Sigmoid colon (tissue), 7 donors: ENCODE measurements at regions of chr15 and their contacts with region 1.

Region 1: GRCh38 chr15:37134699-37135131 is 34.4 kb upstream of the MEIS2 start:
- DNase-seq: no peak
- H3K4me3 ChIP-seq: no peak overlapping the region
- H3K27ac ChIP-seq: no peak overlapping the region
- H3K4me1 ChIP-seq: peaks cover 0 to 42% (median 21%) of the 10 kb centered on the region in 4 donors
- H3K27me3 ChIP-seq: no peaks in the 10 kb centered on the region
- CTCF ChIP-seq: peak; percentile 64 to 84 (median 73)
- EP300 ChIP-seq: no peak
- POLR2A ChIP-seq: no peak

Region 2: GRCh38 chr15:35751413-35752133 is 1383.1 kb before region 1 on chr15:
- intact Hi-C with region 1: loop called (anchors 5 kb)
- DNase-seq: peak; percentile 84
- H3K4me3 ChIP-seq: no peak overlapping the region
- H3K27ac ChIP-seq: no peak overlapping the region
- H3K4me1 ChIP-seq: peaks cover 0 to 20% (median 0%) of the 10 kb centered on the region in 4 donors
- H3K27me3 ChIP-seq: no peaks in the 10 kb centered on the region
- CTCF ChIP-seq: peak; percentile 8 to 72 (median 48)
- EP300 ChIP-seq: no peak
- POLR2A ChIP-seq: no peak

Region 3: DNA sequence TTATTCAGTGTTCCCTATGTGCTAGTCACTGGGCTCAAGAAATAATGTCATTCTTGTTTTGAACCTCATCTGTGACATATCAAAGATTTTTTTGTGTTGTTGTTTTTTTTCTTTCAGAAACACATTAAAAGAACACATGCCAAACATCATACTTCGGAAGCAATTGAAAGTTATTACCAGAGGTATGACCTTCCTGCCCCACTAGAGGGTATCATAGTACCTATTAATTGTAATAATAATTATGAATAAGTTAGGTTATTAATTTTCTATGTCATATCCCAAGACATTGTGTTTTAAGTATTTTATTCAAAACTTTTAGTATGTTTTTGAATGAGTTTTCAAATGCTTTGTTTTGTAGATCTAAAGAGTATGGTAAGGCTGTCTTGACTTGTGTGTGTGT is 489.6 kb before region 1 on chr15:
- intact Hi-C with region 1: loop called (anchors 10 kb)
- DNase-seq: no peak
- H3K4me3 ChIP-seq: no peak overlapping the region
- H3K27ac ChIP-seq: no peak overlapping the region
- H3K4me1 ChIP-seq: peaks cover 0 to 7% (median 0%) of the 10 kb centered on the region in 4 donors
- H3K27me3 ChIP-seq: no peaks in the 10 kb centered on the region
- CTCF ChIP-seq: peak in 1 of 4 experiments; percentile 38
- EP300 ChIP-seq: no peak
- POLR2A ChIP-seq: no peak

Region 4: GRCh38 chr15:36982430-36982829 is 152.3 kb before region 1 on chr15:
- intact Hi-C with region 1: no loop called
- DNase-seq: no peak
- H3K4me3 ChIP-seq: no peak overlapping the region
- H3K27ac ChIP-seq: no peak overlapping the region
- H3K4me1 ChIP-seq: no peaks in the 10 kb centered on the region
- H3K27me3 ChIP-seq: no peaks in the 10 kb centered on the region
- CTCF ChIP-seq: no peak
- EP300 ChIP-seq: no peak
- POLR2A ChIP-seq: no peak

Region 5: GRCh38 chr15:37106490-37107001 is 28.2 kb before region 1 on chr15:
- intact Hi-C with region 1: loop called (anchors 2 kb)
- DNase-seq: peak; percentile 85
- H3K4me3 ChIP-seq: peak overlapping the region; percentile 21 to 87 (median 61)
- H3K27ac ChIP-seq: peak overlapping the region; percentile 95 to 97 (median 96)
- H3K4me1 ChIP-seq: peaks cover 0 to 10% (median 3%) of the 10 kb centered on the region in 4 donors
- H3K27me3 ChIP-seq: no peaks in the 10 kb centered on the region
- CTCF ChIP-seq: peak in 1 of 4 experiments; percentile 8
- EP300 ChIP-seq: no peak
- POLR2A ChIP-seq: no peak

Region 6: DNA sequence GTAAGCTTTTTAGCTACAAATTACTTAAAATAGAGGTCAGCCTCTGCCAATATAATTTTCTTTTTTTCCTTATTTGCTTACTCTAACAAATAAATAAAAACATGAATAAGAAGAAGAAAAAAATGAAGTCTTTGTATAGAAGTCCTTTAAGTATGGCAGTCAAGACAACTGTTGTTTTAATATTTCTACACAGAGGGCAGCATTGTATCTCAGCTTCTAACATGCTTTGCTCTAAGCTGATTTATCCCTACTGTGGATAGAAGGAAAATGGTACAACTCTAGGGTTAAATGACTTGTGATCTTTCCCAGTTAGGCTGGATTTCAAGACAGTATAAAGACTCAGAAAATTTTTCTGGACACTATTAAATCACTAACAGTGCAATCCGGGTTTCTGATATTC is 70.0 kb after region 1 on chr15:
- intact Hi-C with region 1: no loop called
- DNase-seq: no peak
- H3K4me3 ChIP-seq: no peak overlapping the region
- H3K27ac ChIP-seq: no peak overlapping the region
- H3K4me1 ChIP-seq: no peaks in the 10 kb centered on the region
- H3K27me3 ChIP-seq: no peaks in the 10 kb centered on the region
- CTCF ChIP-seq: no peak
- EP300 ChIP-seq: no peak
- POLR2A ChIP-seq: no peak